MCF 10A (cell line): ENCODE measurements at regions of chr1 and their contacts with region 1.

Region 1: GRCh38 chr1:212035123-212035834 is at the starts of genes DTL and INTS7:
- DNase-seq: peak; percentile 100
- H3K4me3 Mint-ChIP-seq: peak within 1 kb of the TSS; percentile 88
- H3K27ac Mint-ChIP-seq: peak within 1 kb of the TSS; percentile 89
- H3K4me1 Mint-ChIP-seq: peaks cover 65% of the 10 kb centered on the region
- H3K27me3 Mint-ChIP-seq: no peaks in the 10 kb centered on the region
- CTCF ChIP-seq: peak; percentile 99
- total RNA-seq, gene DTL: 20.2 and 34.4 TPM in 2 replicates
- total RNA-seq, gene INTS7: 50.0 and 62.3 TPM in 2 replicates

Region 2: GRCh38 chr1:211492511-211493132 is 542.7 kb before region 1 on chr1:
- CTCF ChIA-PET with region 1: no interaction called
- POLR2A ChIA-PET with region 1: no interaction called
- intact Hi-C with region 1: no loop called
- DNase-seq: no peak
- H3K4me3 Mint-ChIP-seq: no peak overlapping the region
- H3K27ac Mint-ChIP-seq: no peak overlapping the region
- H3K4me1 Mint-ChIP-seq: no peaks in the 10 kb centered on the region
- H3K27me3 Mint-ChIP-seq: no peaks in the 10 kb centered on the region
- CTCF ChIP-seq: no peak

Region 3: DNA sequence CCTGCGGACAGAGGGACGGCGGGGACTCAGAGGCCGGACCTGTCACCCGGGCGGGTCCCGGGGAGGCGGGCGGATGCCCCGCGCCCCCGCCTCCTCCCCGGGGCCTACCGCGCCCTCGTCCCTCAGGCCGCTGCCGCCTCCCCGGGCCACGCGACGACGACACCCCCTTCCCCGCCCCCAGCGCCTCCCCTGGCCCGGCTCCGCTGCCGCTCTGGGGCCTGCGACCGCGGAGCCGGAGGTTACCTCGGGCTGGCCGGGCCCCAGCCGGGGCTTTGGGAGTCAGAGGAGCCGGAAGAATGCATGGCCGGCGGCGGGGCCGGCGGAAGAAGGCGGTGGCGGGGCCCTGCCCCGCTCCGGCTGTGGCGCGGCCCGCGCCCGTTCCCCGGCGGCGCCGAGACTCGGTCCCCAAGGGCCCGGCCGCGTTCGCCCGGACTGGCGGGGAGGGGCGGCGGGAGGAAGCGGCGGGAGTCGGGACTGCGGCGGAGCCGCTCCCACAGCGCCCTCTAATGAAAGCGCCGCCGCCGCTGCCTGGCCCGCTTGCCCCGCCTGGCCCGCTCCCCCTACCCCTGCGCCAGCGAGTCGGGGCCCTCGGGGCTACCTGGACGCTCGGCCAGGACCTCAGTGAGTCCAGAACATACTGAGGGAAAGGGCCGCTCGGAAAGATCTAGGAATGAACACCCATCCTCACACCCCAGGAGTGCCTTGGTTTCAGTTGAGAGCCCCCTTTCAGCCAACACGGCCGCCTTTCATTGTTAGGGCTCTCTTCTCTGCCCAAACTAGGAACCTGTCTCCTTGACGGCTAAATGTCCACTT is 204.7 kb before region 1 on chr1 and contains the start of gene LPGAT1:
- CTCF ChIA-PET with region 1: interaction called, 7 read pairs
- POLR2A ChIA-PET with region 1: interaction called, 9 read pairs
- intact Hi-C with region 1: loop called (anchors 1 kb)
- DNase-seq: peak; percentile 87
- H3K4me3 Mint-ChIP-seq: peak within 1 kb of the TSS; percentile 95
- H3K27ac Mint-ChIP-seq: peak within 1 kb of the TSS; percentile 92
- H3K4me1 Mint-ChIP-seq: peaks cover 33% of the 10 kb centered on the region
- H3K27me3 Mint-ChIP-seq: no peaks in the 10 kb centered on the region
- CTCF ChIP-seq: peak; percentile 91
- total RNA-seq, gene LPGAT1: 76.2 and 82.4 TPM in 2 replicates

Region 4: GRCh38 chr1:212002536-212002935 is 32.7 kb before region 1 on chr1:
- CTCF ChIA-PET with region 1: interaction called, 44 read pairs
- POLR2A ChIA-PET with region 1: interaction called, 385 read pairs
- intact Hi-C with region 1: no loop called
- DNase-seq: no peak
- H3K4me3 Mint-ChIP-seq: no peak overlapping the region
- H3K27ac Mint-ChIP-seq: no peak overlapping the region
- H3K4me1 Mint-ChIP-seq: no peaks in the 10 kb centered on the region
- H3K27me3 Mint-ChIP-seq: no peaks in the 10 kb centered on the region
- CTCF ChIP-seq: no peak

Region 5: DNA sequence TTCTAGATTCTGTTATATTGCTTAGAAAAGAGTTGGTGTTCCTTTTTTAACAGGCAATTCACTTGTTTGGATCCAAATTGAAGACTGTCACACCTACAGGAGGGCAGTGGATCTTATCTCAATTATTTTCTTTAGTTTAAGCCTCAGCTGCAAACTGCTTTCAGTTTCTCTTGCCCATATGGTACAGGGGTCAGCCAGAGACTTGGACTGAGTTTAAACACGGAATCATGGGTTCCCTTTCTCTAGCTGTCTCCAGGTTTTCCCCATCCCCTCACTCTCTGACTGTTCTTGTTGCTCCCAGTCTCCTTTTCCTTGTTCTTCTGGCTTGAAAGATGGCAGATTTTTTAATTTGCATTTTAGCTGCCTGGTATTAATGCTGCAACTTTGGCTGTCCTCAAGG is 18.7 kb after region 1 on chr1:
- CTCF ChIA-PET with region 1: interaction called, 95 read pairs
- POLR2A ChIA-PET with region 1: interaction called, 97 read pairs
- intact Hi-C with region 1: no loop called
- DNase-seq: no peak
- H3K4me3 Mint-ChIP-seq: no peak overlapping the region
- H3K27ac Mint-ChIP-seq: no peak overlapping the region
- H3K4me1 Mint-ChIP-seq: peaks cover 12% of the 10 kb centered on the region
- H3K27me3 Mint-ChIP-seq: no peaks in the 10 kb centered on the region
- CTCF ChIP-seq: no peak

Region 6: DNA sequence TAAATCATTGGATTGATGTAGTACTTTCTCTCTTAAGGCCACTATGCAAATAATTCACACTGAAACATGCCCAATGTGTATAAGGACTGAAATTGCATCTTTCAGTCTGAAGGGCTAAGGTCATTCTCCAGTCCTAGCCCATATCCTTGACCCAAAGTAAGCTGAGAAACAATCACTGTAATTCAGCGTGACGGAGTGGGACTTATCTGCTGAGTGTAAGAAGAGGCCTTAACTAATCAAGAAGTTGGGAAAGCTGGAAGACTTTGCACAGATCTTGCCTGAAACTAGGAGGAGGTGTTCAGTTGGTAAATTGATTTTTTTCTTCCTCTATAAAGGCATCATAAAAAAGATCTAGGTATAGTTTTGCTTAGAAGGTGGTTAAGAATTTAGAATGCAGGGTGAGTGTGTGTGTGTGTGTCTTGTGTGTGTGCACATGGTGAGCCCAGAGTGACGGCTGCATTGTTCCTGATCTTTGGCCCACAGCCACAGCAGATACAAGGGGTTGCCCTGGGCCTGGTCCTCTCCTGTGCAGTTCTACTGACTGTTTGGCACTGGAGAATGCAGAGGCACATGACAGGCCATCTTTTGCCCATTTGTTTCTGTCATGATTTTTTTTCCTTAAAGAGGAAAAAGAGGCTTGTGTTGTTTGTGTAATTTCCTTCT is 236.7 kb after region 1 on chr1:
- CTCF ChIA-PET with region 1: no interaction called
- POLR2A ChIA-PET with region 1: no interaction called
- intact Hi-C with region 1: no loop called
- DNase-seq: no peak
- H3K4me3 Mint-ChIP-seq: no peak overlapping the region
- H3K27ac Mint-ChIP-seq: no peak overlapping the region
- H3K4me1 Mint-ChIP-seq: no peaks in the 10 kb centered on the region
- H3K27me3 Mint-ChIP-seq: no peaks in the 10 kb centered on the region
- CTCF ChIP-seq: no peak

Region 7: GRCh38 chr1:212315907-212316306 is 280.6 kb after region 1 on chr1:
- CTCF ChIA-PET with region 1: interaction called, 31 read pairs
- POLR2A ChIA-PET with region 1: interaction called, 6 read pairs
- intact Hi-C with region 1: no loop called
- DNase-seq: peak; percentile 72
- H3K4me3 Mint-ChIP-seq: no peak overlapping the region
- H3K27ac Mint-ChIP-seq: peak overlapping the region; percentile 60
- H3K4me1 Mint-ChIP-seq: peaks cover 14% of the 10 kb centered on the region
- H3K27me3 Mint-ChIP-seq: no peaks in the 10 kb centered on the region
- CTCF ChIP-seq: peak; percentile 48